GM10248 (cell line): ENCODE measurements at regions of chr6 and their contacts with region 1.

Region 1: GRCh38 chr6:158769771-158770432 is 49.3 kb downstream of the EZR start:
- DNase-seq: no peak
- CTCF ChIP-seq: no peak

Region 2: DNA sequence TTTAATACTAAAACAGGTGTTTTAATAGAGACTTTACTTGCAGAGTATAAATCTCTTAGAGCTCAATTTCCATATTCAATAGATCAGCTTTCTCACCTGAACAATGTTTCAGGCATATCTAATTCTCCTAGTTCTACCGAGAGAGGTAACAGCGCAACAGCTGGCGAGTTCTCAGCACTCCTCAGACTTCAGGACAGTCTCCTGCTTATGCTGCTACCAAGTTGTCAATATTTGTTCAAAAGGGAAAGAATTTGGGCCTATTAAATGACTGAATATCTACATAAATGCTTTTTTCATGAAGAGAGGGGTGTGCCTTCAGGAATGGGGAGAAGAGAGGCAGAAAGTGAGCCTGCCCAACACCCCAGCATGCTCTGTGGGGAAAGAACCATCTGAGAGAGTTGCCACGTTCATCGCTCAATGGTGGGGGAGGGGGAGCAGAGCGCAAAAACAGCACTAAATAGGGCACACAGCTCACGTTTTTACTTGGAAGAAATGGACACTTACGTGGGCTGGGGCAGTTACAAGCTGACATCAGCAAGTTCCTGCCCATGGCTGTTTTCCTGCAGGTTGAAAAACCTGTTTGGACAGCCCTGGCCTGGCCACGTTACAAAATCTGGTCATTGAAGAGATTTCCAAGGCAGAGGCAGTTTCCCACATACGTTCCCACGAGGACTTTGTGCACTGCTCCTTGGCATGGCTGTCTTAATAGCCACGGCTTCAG is 11.2 kb after region 1 on chr6:
- CTCF ChIA-PET with region 1: interaction called, 23 read pairs
- POLR2A ChIA-PET with region 1: no interaction called
- DNase-seq: no peak
- CTCF ChIP-seq: no peak